Head of caudate nucleus (tissue), 42 donors: ENCODE measurements at regions of chr13 and their contacts with region 1.

Region 1: GRCh38 chr13:38421590-38422560 is 72.2 kb downstream of the UFM1 start:
- DNase-seq: no peak

Region 2: GRCh38 chr13:38444904-38445303 is 23.0 kb after region 1 on chr13:
- intact Hi-C with region 1: loop called (anchors 2 kb)
- DNase-seq: no peak